Esophagus muscularis mucosa (tissue), 4 donors: ENCODE measurements at regions of chr12 and their contacts with region 1.

Region 1: GRCh38 chr12:133080368-133081158 is at the start of gene ZNF140:
- DNase-seq: peak; percentile 98
- H3K4me3 ChIP-seq: peak within 1 kb of the TSS; percentile 75 to 89 (median 82)
- H3K27ac ChIP-seq: peak within 1 kb of the TSS; percentile 96 to 99 (median 97)
- H3K4me1 ChIP-seq: peaks cover 11 to 19% (median 15%) of the 10 kb centered on the region in 4 donors
- H3K27me3 ChIP-seq: no peaks in the 10 kb centered on the region
- CTCF ChIP-seq: peak; percentile 11 to 40 (median 37)
- EP300 ChIP-seq: no peak
- POLR2A ChIP-seq: no peak
- total RNA-seq, gene ZNF140: 12.0 to 13.8 (median 13.1) TPM

Region 2: GRCh38 chr12:132986001-132986912 is 94.3 kb before region 1 on chr12 and contains the start of gene ZNF26:
- intact Hi-C with region 1: loop called (anchors 2 kb)
- DNase-seq: peak; percentile 96
- H3K4me3 ChIP-seq: peak within 1 kb of the TSS; percentile 73 to 96 (median 81)
- H3K27ac ChIP-seq: peak within 1 kb of the TSS; percentile 79 to 92 (median 86)
- H3K4me1 ChIP-seq: peaks cover 9 to 23% (median 19%) of the 10 kb centered on the region in 4 donors
- H3K27me3 ChIP-seq: no peaks in the 10 kb centered on the region
- CTCF ChIP-seq: no peak
- EP300 ChIP-seq: no peak
- POLR2A ChIP-seq: no peak
- total RNA-seq, gene ZNF26: 9.6 to 15.8 (median 10.9) TPM

Region 3: DNA sequence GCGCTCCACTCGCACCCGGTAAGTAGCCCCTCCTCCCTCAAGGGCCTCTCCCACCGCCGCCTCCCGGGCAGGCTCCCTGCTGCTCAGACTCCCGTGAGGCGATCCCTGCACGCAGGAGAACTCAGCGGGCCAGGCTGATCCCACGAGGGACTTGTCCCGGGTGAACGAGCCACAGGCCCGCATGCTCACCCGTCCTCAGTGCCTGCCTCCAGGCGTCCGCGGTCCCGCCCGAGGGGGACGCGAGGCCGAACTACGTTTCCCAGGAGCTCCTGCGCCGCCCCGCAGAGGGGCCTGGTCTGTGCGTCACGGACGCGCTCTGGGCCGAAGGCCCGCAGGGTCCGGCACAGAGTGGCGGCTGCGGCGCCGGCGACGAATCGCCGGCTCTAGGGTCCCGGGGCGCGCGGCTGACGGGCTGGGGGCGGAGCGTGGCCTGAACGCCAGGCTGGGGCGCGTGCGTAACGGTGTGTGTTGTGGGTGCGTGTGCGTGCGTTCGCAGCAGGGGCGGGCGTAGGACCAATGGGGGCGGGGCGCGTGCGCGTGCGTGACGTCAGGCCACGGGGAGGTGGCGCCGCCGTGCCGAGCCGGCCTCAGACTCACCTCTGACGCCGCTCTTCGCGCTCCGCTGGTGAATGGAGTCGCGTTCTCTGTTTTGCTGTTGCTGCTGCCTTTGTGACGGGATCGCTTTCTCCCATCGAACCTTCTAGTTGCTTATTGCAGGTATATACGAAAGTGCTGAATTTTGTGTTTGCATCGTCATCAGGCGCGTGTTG is 49.7 kb after region 1 on chr12 and contains the starts of genes ZNF10 and ZNF891:
- intact Hi-C with region 1: loop called (anchors 1 kb)
- DNase-seq: peak; percentile 99
- H3K4me3 ChIP-seq: peak within 1 kb of the TSS; percentile 78 to 92 (median 80)
- H3K27ac ChIP-seq: peak within 1 kb of the TSS; percentile 94 to 99 (median 96)
- H3K4me1 ChIP-seq: peaks cover 7 to 14% (median 10%) of the 10 kb centered on the region in 4 donors
- H3K27me3 ChIP-seq: no peaks in the 10 kb centered on the region
- CTCF ChIP-seq: no peak
- EP300 ChIP-seq: peak; percentile 94
- POLR2A ChIP-seq: peak; percentile 16
- total RNA-seq, gene ZNF10: 3.4 to 15.4 (median 9.7) TPM
- total RNA-seq, gene ZNF891: 1.8 to 4.6 (median 2.6) TPM